Activated CD8-positive, alpha-beta memory T cell treated with anti-CD3 and anti-CD28 coated beads, Interleukin-2, amount 10 ng/mL, durations not matched to agents 7 days and 5 days (primary cell): ENCODE measurements at regions of chr1 and their contacts with region 1.

Region 1: DNA sequence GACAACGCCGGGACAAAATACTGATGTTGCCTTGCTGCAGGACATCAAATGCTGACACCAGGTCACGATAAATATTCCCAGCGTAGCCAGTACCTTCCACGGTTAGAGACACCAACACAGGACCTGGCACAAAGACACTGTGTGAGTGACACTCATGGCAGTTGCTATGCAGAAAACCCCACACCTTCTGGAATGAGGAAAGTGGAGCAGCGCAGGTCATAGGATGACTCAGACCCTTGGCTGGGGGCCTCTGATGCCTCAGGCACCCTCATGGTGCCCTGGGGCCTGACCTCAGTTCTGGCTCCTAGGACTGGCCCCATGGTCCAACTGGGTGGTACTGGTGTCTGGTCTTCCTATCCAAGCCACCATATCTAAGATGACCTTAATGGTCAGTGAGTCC is 7.0 kb downstream of the DCST2 start:
- DNase-seq: no peak
- ATAC-seq: no peak
- H3K4me3 Mint-ChIP-seq: no peak overlapping the region
- H3K27ac Mint-ChIP-seq: no peak overlapping the region
- H3K4me1 Mint-ChIP-seq: peaks cover 2% of the 10 kb centered on the region
- H3K27me3 Mint-ChIP-seq: no peaks in the 10 kb centered on the region

Region 2: GRCh38 chr1:154974063-154974807 is 52.4 kb before region 1 on chr1 and contains the start of gene CKS1B:
- CTCF ChIA-PET with region 1: no interaction called
- DNase-seq: peak; percentile 98
- ATAC-seq: peak; percentile 89
- H3K4me3 Mint-ChIP-seq: no peak within 1 kb of the TSS
- H3K27ac Mint-ChIP-seq: no peak within 1 kb of the TSS
- H3K4me1 Mint-ChIP-seq: peaks cover 38% of the 10 kb centered on the region
- H3K27me3 Mint-ChIP-seq: no peaks in the 10 kb centered on the region
- total RNA-seq, gene CKS1B: 149 to 155 TPM

Region 3: GRCh38 chr1:155044812-155045690 is 18.5 kb after region 1 on chr1:
- CTCF ChIA-PET with region 1: interaction called, 328 read pairs
- DNase-seq: peak; percentile 81
- ATAC-seq: peak; percentile 93
- H3K4me3 Mint-ChIP-seq: no peak overlapping the region
- H3K27ac Mint-ChIP-seq: no peak overlapping the region
- H3K4me1 Mint-ChIP-seq: peaks cover 15% of the 10 kb centered on the region
- H3K27me3 Mint-ChIP-seq: peaks cover 5% of the 10 kb centered on the region